ENCODE measurements at regions of chr14 and their contacts with region 1.

Region 1: DNA sequence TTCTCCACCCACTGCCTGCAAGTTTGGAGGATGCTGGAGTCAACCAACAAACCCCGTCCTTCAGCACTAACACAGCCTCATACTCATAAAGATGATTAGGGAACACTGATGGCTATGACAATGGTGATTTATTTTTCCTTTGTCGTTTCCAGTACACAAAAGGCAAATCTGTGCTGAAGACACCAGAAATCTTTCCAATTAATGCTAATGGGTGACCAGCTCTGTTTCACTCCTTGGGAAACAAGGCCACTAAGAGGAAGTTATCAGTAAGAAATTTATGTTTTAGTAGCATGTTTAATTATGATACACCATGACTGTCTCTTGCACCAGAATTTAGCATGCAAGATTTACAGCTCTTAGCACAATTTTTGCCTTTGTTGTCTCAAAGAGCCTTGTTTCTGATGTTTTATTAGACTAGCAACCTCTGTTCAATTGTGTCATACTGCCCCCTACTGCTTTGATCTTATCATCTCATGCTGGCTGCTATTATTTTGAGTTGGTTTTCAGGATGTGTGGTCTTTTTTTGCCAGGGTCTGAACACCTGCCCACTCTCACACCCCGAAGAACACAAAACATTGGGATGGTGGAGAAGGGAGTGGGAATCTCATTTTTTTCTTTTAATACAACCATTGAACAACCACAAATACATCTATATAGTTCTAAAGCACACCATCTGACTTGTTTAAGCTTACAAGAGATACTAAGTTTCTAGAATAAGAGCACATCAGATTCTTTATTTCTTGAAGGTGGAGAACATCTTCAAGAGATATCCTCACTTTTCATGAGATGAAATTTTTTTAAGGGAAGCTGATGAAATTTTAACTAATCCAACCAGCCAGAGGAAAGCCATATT is 160.9 kb downstream of the SPTSSA start:
- DNase-seq: peak; percentile 8
- ATAC-seq: peak; percentile 30
- H3K4me3 Mint-ChIP-seq: no peak overlapping the region
- H3K27ac Mint-ChIP-seq: no peak overlapping the region
- H3K4me1 Mint-ChIP-seq: no peaks in the 10 kb centered on the region
- H3K27me3 Mint-ChIP-seq: no peaks in the 10 kb centered on the region

Region 2: GRCh38 chr14:32576088-32576795 is 1724.9 kb before region 1 on chr14:
- CTCF ChIA-PET with region 1: no interaction called
- POLR2A ChIA-PET with region 1: no interaction called
- intact Hi-C with region 1: loop called in 1 of 2 experiments (anchors 5 kb)
- DNase-seq: peak; percentile 46
- ATAC-seq: no peak
- H3K4me3 Mint-ChIP-seq: no peak overlapping the region
- H3K27ac Mint-ChIP-seq: no peak overlapping the region
- H3K4me1 Mint-ChIP-seq: no peaks in the 10 kb centered on the region
- H3K27me3 Mint-ChIP-seq: peaks cover 12% of the 10 kb centered on the region

Region 3: DNA sequence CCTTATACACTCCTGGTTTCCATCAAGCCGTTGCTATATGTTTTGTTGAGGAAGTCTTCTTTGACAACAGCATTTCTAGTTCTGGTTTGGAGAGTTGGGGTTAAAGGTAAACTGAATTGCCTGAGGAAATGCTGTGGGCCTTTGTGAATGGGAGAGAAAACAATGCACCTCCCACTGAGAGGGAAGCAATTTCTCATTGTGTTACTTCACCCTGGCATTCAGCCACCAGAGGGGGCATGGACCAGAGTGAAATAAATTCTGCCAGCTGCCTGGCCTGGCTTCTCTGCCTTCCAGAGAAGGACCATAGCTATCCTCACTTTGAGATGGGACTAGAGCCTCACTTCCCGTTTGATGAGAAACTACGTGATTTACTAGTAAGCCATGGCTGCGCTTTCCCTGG is 825.5 kb before region 1 on chr14:
- CTCF ChIA-PET with region 1: no interaction called
- POLR2A ChIA-PET with region 1: no interaction called
- intact Hi-C with region 1: loop called in 1 of 2 experiments (anchors 10 kb)
- DNase-seq: peak; percentile 37
- ATAC-seq: no peak
- H3K4me3 Mint-ChIP-seq: no peak overlapping the region
- H3K27ac Mint-ChIP-seq: no peak overlapping the region
- H3K4me1 Mint-ChIP-seq: no peaks in the 10 kb centered on the region
- H3K27me3 Mint-ChIP-seq: peaks cover 6% of the 10 kb centered on the region

Region 4: GRCh38 chr14:33839193-33840076 is 461.7 kb before region 1 on chr14:
- CTCF ChIA-PET with region 1: interaction called, 6 read pairs
- POLR2A ChIA-PET with region 1: no interaction called
- intact Hi-C with region 1: loop called (anchors 1 kb)
- DNase-seq: peak; percentile 68
- ATAC-seq: peak; percentile 53
- H3K4me3 Mint-ChIP-seq: no peak overlapping the region
- H3K27ac Mint-ChIP-seq: no peak overlapping the region
- H3K4me1 Mint-ChIP-seq: no peaks in the 10 kb centered on the region
- H3K27me3 Mint-ChIP-seq: no peaks in the 10 kb centered on the region

Region 5: DNA sequence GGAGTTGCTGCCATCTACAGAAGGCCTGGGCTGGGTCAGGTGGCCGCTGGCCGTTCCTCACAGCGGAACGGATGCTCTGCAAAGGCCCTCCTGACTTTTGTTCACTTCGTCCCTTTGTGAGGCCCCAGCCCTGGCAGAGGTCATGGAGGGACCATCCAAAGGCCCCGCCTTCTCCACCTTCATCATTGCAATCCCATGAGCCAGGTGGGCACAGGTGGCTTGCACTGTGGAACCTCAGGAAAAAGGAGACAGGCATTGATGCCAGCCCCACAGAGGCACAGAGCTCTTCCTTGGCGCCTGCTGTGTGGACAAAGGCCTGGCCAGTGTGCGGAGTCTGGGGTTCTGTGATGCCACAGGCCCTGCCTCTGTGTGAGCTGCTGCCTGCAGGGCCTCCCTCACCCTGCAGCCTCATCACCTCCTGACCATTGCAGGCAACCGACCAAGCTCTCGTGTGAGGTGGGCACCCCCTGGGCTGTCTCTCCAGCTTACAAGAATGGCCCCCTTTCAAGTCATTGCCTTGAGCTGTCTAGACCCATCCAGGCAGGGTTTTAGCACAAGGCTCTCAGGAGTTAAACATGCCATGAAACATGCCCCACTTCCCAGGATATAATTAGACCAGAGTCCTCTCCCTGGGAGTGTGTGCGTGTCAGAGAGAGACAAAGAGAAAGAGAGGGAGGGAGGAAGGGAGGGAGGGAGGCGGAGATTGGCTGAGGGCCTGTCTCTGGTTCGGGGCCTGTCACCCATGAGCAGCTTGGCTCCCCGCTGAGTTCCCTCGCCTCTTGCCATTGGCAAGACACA is 1084.1 kb after region 1 on chr14:
- CTCF ChIA-PET with region 1: no interaction called
- POLR2A ChIA-PET with region 1: no interaction called
- intact Hi-C with region 1: no loop called
- DNase-seq: no peak
- ATAC-seq: no peak
- H3K4me3 Mint-ChIP-seq: no peak overlapping the region
- H3K27ac Mint-ChIP-seq: no peak overlapping the region
- H3K4me1 Mint-ChIP-seq: no peaks in the 10 kb centered on the region
- H3K27me3 Mint-ChIP-seq: no peaks in the 10 kb centered on the region

Measured in activated CD4-positive, alpha-beta T cell treated with anti-CD3 and anti-CD28 coated beads for 36 hours (primary cell).